ENCODE measurements at regions of chr16 and their contacts with region 1.

Region 1: DNA sequence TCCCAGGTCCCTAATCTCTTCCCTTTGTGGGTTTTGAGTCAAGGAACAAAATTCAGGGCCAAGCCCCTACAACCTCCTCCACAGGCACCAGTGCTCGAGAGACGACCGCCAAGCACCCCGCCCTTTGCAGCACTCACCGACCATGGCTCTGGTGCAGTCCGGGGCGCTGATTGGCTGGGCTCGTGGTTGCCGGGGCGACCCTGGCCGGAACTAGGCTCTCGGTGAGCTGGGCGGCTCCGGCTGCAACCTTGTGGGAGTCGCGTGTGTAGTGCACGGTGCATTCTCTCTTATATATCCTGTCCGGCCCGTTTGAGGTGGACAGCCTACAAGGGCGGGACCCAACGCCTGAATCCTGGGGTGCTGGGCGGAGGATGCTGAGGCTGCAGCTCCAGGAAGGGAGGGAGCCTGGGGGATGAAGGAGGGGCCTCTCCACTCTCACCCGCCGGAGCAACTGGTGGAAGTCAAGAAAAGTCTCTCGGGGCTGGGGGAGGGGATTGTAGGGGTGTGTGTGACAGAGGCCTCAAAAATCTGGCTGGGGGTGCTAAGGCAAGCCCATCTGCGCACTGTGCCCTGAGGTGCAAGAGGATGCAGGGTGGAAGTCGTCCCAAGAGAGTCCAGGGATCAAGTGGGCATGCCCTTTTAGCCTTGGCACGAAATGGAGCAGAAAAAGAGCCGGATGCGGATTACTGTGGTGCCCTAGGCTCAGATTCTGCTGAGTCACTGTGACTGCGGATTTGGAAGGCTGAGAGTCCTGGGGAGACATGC is at the start of gene NQO1:
- ATAC-seq: peak; percentile 92 to 100 (median 99)
- H3K4me3 ChIP-seq: peak within 1 kb of the TSS; percentile 36 to 52 (median 37)
- H3K27ac ChIP-seq: peak within 1 kb of the TSS in 1 of 2 donors; percentile 80
- H3K4me1 ChIP-seq: peaks cover 4 to 13% of the 10 kb centered on the region in 2 donors
- total RNA-seq, gene NQO1: 4.1 to 120 (median 32.6) TPM

Region 2: DNA sequence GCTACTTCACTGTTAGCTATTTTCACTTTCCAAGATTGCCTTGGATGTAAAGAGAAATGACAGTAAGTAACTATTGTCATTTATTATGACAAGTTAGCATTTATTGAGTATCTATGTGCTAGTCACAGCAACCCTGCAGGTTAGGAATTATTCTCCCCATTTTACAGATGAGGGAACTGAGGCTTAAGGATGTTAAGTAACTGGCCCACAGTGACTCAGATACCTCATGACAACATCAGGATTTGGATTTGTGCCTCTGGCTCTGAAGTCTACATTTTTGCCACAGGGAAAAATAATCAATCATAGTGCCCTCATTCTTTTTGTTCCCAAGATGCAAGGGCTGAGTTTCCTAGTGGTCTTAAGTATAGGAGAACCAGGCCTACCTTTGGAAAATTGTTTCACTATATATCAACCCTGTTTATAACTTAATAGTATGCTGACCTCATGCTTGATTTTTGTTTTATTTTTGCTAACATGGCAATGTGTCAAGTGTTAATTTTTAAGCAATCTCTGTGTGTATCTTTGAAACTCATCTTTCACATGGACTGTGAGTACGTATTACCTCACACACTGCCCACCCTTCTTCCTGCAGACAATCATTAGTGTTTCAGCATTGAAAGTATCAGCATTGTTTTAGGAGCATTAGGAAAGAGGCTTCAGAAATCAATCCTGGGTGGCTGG is 778.1 kb before region 1 on chr16:
- in situ Hi-C with region 1: no loop called
- ATAC-seq: no peak
- H3K4me3 ChIP-seq: no peak overlapping the region
- H3K27ac ChIP-seq: no peak overlapping the region
- H3K4me1 ChIP-seq: no peaks in the 10 kb centered on the region

Region 3: DNA sequence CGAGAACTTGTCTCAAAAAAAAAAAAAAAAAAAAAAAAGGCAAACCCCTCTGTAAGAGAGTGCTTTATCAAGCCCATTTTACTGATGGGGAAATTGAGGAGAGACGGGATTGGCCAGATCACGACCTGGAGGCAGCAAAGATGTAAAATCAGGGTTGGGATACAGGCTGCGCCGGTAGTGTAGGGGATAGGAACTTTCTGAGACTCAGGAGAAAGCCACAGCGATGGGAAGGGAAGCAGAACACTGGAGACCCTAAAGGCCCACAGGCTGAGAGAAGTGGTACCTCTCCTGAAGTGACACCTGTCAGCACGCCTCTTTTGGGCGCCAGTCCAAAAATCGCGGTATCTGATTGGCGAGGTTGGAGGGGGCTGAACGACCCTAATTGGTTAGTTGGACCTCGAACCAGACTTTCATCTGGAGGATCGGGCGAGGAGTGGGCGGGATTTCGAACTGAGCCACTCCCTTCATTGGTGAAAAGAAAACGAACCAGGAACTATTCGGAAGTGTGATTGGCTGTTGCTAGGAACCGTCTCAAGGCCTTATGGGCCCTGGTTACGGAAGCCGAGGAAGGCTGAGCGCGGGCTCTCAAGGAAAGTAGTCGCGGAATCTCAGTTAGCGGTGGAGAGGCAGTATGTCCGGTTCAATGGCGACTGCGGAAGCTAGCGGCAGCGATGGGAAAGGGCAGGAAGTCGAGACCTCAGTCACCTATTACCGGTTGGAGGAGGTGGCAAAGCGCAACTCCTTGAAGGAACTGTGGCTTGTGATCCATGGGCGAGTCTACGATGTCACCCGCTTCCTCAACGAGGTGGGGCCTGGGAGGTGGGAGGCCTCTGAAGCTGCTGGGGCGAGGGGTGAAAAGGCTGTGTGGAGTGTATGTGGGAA is 302.2 kb before region 1 on chr16 and contains the start of gene CYB5B:
- in situ Hi-C with region 1: loop called in 1 of 9 experiments (anchors 25 kb)
- ATAC-seq: peak; percentile 97 to 99 (median 98)
- H3K4me3 ChIP-seq: peak within 1 kb of the TSS; percentile 50 to 82 (median 62)
- H3K27ac ChIP-seq: peak within 1 kb of the TSS; percentile 21 to 45
- H3K4me1 ChIP-seq: peaks cover 6 to 7% of the 10 kb centered on the region in 2 donors
- total RNA-seq, gene CYB5B: 26.4 to 139 (median 81.4) TPM

Region 4: DNA sequence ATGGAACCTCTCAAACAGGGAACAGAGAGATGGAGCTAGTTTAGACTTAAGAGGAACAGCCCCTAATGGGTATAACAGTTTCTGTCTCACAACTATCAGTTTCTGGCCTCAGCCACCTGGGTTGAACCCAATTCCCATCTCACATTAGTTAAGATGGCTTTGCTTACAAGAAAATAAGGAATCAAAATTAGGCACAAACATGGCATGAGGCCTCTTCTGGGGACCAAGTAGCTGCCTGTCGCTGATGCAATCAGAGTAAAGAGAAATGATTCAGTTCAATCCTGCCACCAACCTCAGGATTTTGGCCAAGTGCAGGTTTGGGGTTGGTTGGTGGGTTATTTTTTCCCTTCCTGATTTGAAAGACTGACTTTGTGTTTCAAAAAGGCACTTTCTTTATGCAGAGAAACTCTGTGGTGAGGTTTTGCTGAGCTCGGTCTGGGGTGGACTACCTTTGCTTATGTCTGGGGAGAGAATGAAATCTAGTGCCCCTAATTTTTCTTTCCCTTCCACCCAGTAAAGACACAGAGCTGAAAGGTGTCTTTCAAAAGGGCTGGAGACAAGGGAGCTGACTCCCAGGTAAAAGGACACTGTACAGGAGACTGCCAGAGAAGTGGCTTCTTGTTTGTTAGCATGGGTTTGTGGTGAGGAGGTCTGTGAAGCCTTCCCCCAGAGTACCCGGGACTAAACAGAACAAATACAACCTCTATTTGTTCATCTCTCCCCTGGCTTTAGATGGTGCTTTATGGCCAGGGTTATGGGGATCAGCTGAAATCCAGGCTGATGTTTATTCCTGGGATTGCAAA is 205.5 kb before region 1 on chr16:
- in situ Hi-C with region 1: no loop called
- ATAC-seq: no peak
- H3K4me3 ChIP-seq: no peak overlapping the region
- H3K27ac ChIP-seq: no peak overlapping the region
- H3K4me1 ChIP-seq: no peaks in the 10 kb centered on the region